Transverse colon (tissue), 4 donors: ENCODE measurements at regions of chr1 and their contacts with region 1.

Region 1: GRCh38 chr1:201114236-201115131 is 2.3 kb upstream of the CACNA1S start:
- DNase-seq: peak; percentile 89
- H3K4me3 ChIP-seq: peak overlapping the region; percentile 34 to 65 (median 52)
- H3K27ac ChIP-seq: peak overlapping the region in 3 of 4 donors; percentile 2 to 58 (median 38)
- H3K4me1 ChIP-seq: peaks cover 0 to 11% (median 7%) of the 10 kb centered on the region in 4 donors
- H3K27me3 ChIP-seq: peaks cover 4% of the 10 kb centered on the region
- CTCF ChIP-seq: peak; percentile 79 to 92 (median 83)
- EP300 ChIP-seq: no peak
- POLR2A ChIP-seq: peak; percentile 56

Region 2: DNA sequence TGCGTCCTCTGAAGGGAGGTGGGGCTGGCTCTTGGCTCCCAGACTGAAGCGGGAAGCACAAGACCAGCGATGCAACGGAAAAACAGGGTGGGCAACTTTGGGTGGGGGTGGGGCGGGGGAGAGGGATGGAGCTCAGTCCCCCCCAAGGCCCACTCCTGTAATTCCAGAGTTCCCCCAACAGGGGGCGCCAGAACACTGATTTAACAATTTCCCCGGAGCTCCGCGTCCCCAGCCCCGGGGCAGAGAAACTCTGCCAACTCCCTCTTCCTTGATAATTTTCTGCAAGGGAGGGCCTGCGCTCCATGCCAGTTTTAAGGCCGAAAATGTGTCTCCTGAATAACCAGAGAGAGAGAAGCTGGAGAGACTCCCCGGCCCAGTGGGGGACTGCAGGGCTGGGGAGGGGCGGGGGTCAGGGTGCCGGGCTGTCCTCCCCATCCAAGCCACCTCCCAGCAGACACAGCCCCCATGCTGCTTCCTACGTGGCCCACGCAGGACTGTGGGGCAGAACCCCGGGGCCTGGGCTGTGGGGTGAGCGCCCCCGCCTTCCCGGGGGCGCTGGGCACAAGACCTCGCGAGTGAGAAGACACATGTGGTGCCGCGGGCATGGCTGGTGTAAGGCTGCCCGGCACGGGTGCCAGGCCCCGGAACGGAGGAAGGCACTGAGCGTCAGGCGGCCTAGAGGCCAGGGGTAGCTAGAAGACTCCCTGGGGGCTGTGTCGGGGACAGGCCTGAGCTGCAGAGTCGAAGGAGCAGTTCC is 142.4 kb before region 1 on chr1:
- in situ Hi-C with region 1: loop called in 2 of 4 experiments (anchors 10 to 25 kb)
- intact Hi-C with region 1: loop called (anchors 5 kb)
- DNase-seq: peak; percentile 66
- H3K4me3 ChIP-seq: no peak overlapping the region
- H3K27ac ChIP-seq: no peak overlapping the region
- H3K4me1 ChIP-seq: peaks cover 3 to 22% (median 13%) of the 10 kb centered on the region in 4 donors
- H3K27me3 ChIP-seq: no peaks in the 10 kb centered on the region
- CTCF ChIP-seq: peak; percentile 79 to 98 (median 96)
- EP300 ChIP-seq: no peak
- POLR2A ChIP-seq: no peak

Region 3: DNA sequence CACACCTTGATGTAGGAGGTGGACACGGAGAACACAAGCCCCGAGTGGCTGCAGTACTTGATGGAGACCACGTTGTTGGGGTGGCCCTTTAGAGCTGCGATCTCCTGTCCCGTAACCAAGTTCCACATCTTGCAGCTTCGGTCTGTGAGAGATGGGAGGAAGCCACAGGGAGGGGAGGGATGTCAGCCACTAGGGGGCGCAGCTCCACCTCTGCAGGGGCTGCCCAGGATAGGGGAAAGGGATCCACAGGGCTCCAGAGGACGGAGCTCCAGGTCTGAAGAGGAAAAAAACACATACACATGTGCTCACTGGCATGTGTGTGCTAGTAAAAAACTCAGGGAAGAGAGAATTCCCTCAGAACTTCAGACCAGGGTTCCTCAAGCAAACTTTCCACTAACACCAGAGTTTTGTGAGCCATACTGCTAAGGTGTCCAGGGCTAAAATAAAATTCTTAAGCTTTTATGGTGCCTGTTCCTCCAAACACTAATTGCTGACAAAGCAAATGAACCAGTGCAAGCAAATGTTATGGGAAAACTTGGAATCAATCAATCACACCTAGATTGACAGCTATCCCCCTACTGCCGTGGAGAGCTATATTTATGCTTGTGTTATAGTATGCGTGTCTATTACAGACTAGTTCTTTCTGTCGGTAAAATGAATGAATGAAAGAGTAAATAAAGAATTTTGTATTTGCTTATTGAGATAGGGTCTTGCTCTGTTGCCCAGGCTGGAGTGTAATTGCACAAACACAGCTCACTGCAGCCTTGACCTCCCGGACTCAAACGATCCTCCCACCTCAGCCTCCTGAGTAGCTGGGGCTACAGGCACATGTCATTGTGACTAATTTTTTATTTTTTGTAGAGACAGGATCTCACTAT is 134.7 kb before region 1 on chr1:
- in situ Hi-C with region 1: loop called in 2 of 4 experiments (anchors 10 to 25 kb)
- intact Hi-C with region 1: no loop called
- DNase-seq: peak; percentile 53
- H3K4me3 ChIP-seq: no peak overlapping the region
- H3K27ac ChIP-seq: no peak overlapping the region
- H3K4me1 ChIP-seq: no peaks in the 10 kb centered on the region
- H3K27me3 ChIP-seq: no peaks in the 10 kb centered on the region
- CTCF ChIP-seq: peak; percentile 28 to 51 (median 46)
- EP300 ChIP-seq: no peak
- POLR2A ChIP-seq: no peak

Region 4: GRCh38 chr1:201176940-201177339 is 62.5 kb after region 1 on chr1:
- in situ Hi-C with region 1: no loop called
- intact Hi-C with region 1: no loop called
- DNase-seq: peak; percentile 30
- H3K4me3 ChIP-seq: no peak overlapping the region
- H3K27ac ChIP-seq: no peak overlapping the region
- H3K4me1 ChIP-seq: no peaks in the 10 kb centered on the region
- H3K27me3 ChIP-seq: no peaks in the 10 kb centered on the region
- CTCF ChIP-seq: no peak
- EP300 ChIP-seq: no peak
- POLR2A ChIP-seq: no peak